Activated CD8-positive, alpha-beta T cell treated with anti-CD3 and anti-CD28 coated beads for 36 hours (primary cell): ENCODE measurements at regions of chr2 and their contacts with region 1.

Region 1: DNA sequence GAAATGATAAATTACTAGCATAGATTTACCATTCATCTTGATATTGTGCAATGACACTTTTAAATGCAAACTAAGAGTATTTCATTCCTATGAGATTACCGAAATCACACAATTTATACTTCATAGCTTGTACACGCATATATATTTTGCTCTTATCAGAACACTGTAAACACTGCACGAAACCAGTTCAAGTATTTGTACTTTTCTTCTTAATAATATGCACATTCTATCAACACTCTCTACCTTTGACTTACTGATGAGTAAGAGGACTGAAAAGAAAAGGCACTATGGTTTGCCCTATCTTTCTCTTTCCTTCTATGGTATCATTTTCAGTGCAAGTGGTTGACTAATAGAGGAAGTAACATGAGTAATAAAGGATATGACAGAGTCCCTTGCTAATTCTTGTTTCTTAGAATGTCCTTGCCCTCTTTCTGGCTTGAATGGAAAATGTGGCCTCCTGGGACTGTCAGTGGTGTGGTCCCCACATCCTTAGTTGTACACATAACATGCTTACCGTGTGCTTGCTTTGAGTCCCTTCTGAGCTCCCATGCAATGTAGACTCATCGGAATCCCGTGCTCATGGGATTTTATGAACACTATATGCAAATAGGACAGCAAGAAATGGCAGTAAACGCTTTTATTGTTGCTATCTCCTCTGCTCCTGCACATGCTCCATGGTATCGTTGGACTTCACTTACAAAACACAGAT is 363.5 kb upstream of the TNP1 start:
- DNase-seq: peak; percentile 81
- ATAC-seq: peak; percentile 92
- H3K4me3 Mint-ChIP-seq: peak overlapping the region; percentile 7
- H3K27ac Mint-ChIP-seq: peak overlapping the region; percentile 88
- H3K4me1 Mint-ChIP-seq: peaks cover 34% of the 10 kb centered on the region
- H3K27me3 Mint-ChIP-seq: peaks cover 9% of the 10 kb centered on the region
- CTCF ChIP-seq: no peak

Region 2: GRCh38 chr2:217277646-217278398 is 54.4 kb after region 1 on chr2:
- CTCF ChIA-PET with region 1: no interaction called
- POLR2A ChIA-PET with region 1: no interaction called
- intact Hi-C with region 1: no loop called
- DNase-seq: no peak
- ATAC-seq: no peak
- H3K4me3 Mint-ChIP-seq: no peak overlapping the region
- H3K27ac Mint-ChIP-seq: no peak overlapping the region
- H3K4me1 Mint-ChIP-seq: no peaks in the 10 kb centered on the region
- H3K27me3 Mint-ChIP-seq: peaks cover 2% of the 10 kb centered on the region
- CTCF ChIP-seq: no peak

Region 3: GRCh38 chr2:217756375-217757107 is 533.2 kb after region 1 on chr2:
- CTCF ChIA-PET with region 1: no interaction called
- POLR2A ChIA-PET with region 1: no interaction called
- intact Hi-C with region 1: loop called (anchors 10 kb)
- DNase-seq: peak; percentile 90
- ATAC-seq: peak; percentile 86
- H3K4me3 Mint-ChIP-seq: peak overlapping the region; percentile 74
- H3K27ac Mint-ChIP-seq: peak overlapping the region; percentile 91
- H3K4me1 Mint-ChIP-seq: peaks cover 38% of the 10 kb centered on the region
- H3K27me3 Mint-ChIP-seq: peaks cover 1% of the 10 kb centered on the region
- CTCF ChIP-seq: peak; percentile 92